OCI-LY7 (cell line): ENCODE measurements at regions of chr17 and their contacts with region 1.

Region 1: GRCh38 chr17:49788478-49789242 is at the start of gene KAT7:
- DNase-seq: peak; percentile 100
- H3K4me3 ChIP-seq: peak within 1 kb of the TSS; percentile 88
- H3K27ac ChIP-seq: peak within 1 kb of the TSS; percentile 86
- H3K4me1 ChIP-seq: peaks cover 25% of the 10 kb centered on the region
- CTCF ChIP-seq: no peak
- total RNA-seq, gene KAT7: 41.0 and 43.3 TPM in 2 replicates

Region 2: GRCh38 chr17:49739641-49740271 is 48.9 kb before region 1 on chr17:
- CTCF ChIA-PET with region 1: no interaction called
- POLR2A ChIA-PET with region 1: interaction called, 4 read pairs
- intact Hi-C with region 1: loop called (anchors 1 kb)
- DNase-seq: peak; percentile 96
- H3K4me3 ChIP-seq: peak overlapping the region; percentile 62
- H3K27ac ChIP-seq: peak overlapping the region; percentile 94
- H3K4me1 ChIP-seq: peaks cover 78% of the 10 kb centered on the region
- CTCF ChIP-seq: no peak

Region 3: DNA sequence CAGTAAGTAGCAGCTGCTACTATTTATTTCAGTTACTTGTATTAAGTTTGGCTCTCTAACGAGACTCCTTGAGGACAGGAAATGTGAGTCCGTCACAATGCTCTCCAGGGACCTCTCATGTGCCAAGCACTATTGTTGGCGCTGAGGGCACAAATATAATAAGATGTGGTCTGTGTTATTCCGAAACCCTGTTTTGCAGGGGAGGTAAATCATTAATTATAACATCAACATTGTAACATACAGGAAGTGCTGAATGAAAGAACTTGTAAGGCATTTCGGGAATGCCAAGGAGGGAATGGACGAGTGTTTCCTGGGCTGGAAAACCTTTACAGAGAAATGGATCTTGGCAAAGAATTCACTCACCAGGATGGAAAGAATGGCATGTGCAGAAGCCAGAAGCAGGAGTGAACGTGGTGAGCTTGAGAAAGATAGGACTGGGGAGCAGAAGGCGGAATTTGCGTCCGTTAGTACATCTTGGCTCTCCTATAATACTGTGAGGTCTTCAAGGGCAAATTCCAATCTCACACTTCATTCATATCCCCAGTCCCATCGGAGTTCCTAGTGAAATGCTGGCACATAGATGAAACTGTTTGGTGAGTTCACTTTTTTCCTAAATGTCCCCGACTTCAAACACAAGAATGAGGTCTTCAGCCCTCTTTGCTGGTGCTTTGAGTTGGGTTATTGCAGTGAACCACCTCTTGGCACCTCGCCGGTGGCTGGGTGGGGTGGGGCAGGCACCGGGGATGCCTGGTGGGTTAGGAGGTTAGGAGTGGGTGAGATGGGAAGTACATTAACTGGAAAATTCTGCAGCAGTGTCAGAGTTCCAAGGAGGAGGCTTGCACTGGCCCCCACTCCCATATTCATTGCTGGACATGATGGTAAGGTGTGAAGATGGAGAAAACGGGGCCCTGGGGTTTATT is 47.7 kb after region 1 on chr17:
- CTCF ChIA-PET with region 1: no interaction called
- POLR2A ChIA-PET with region 1: no interaction called
- intact Hi-C with region 1: no loop called
- DNase-seq: no peak
- H3K4me3 ChIP-seq: no peak overlapping the region
- H3K27ac ChIP-seq: no peak overlapping the region
- H3K4me1 ChIP-seq: peaks cover 5% of the 10 kb centered on the region
- CTCF ChIP-seq: no peak